GM13976 (cell line): ENCODE measurements at regions of chr1 and their contacts with region 1.

Region 1: DNA sequence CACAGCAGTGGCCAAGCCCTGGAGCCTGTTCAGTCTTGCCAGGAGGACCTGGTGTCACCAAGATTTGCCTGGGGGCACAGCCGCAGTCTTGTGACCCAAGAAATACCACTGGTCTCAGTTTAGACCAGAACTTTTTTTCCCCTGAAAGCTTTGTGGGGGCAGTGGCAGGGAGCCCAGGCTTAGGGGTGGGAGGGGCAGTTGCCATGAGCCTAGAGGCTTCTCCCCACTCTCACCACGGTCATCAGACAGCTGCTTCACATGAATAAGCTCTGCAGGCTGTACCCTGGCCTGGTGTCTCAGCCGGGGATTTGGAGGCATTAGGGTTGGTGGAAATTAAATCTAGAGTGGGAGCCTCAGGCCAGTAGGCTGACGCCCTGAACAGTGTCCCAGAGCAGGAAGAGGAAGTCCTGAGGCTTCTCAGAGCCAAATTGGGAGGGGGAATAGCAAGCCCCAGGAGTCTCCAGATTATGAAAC is 73.7 kb downstream of the SLC16A1 start:
- DNase-seq: no peak
- CTCF ChIP-seq: no peak

Region 2: DNA sequence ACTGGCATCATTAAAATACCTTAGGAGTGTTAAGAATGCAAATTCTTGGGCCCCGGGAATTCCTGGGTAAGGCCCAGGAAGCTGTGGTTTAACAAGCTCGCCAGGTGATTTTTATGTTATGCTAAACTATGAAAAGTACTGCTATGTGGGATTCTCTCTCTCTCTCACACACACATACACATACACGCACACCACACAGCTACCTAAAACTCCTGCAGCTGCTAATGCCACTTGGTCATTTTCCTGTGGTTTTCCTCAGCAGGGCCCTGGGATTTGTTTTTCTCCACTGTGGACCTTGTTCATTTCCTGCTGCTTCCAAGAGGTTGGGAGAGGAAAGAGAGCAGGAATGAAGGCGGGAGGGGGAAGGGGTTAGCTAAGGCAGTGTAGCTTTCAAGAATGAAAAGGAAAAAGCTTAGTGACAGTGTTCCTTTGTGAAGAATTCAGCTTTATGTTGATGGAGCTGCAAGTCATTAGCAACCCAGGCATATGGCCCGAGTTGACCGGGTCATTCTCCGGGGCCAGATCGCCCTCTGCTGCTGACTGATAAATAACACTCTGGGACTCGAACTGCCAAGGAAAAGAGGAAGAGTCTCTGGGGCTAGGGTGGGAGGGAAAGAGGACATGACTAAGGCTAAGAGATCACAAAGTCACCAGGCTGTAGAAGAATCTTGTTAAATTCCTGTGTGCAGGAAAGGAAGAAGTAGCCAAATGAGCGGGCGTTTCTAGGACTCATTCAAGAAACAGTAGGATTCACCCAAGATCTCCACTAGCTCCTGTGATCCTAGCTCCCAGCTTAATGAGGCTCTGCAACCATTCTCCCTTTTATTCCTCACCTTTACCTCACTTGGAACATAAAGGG is 160.2 kb after region 1 on chr1:
- in situ Hi-C with region 1: loop called (anchors 10 kb)
- DNase-seq: peak; percentile 77
- CTCF ChIP-seq: peak; percentile 63